ENCODE measurements at regions of chr14 and their contacts with region 1.

Region 1: GRCh38 chr14:93206793-93207467 is at the starts of genes GON7 and UBR7:
- DNase-seq: peak; percentile 96
- ATAC-seq: peak; percentile 99
- total RNA-seq, gene GON7: 15.6 TPM
- total RNA-seq, gene UBR7: 20.5 TPM

Region 2: GRCh38 chr14:93184388-93185353 is 22.3 kb before region 1 on chr14 and contains the starts of genes LYSET and MOAP1:
- intact Hi-C with region 1: loop called (anchors 1 kb)
- DNase-seq: peak; percentile 95
- ATAC-seq: peak; percentile 94
- total RNA-seq, gene LYSET: 23.0 TPM
- total RNA-seq, gene MOAP1: 52.5 TPM

Region 3: GRCh38 chr14:93301821-93302447 is 95.0 kb after region 1 on chr14:
- intact Hi-C with region 1: no loop called
- DNase-seq: no peak
- ATAC-seq: no peak

Region 4: DNA sequence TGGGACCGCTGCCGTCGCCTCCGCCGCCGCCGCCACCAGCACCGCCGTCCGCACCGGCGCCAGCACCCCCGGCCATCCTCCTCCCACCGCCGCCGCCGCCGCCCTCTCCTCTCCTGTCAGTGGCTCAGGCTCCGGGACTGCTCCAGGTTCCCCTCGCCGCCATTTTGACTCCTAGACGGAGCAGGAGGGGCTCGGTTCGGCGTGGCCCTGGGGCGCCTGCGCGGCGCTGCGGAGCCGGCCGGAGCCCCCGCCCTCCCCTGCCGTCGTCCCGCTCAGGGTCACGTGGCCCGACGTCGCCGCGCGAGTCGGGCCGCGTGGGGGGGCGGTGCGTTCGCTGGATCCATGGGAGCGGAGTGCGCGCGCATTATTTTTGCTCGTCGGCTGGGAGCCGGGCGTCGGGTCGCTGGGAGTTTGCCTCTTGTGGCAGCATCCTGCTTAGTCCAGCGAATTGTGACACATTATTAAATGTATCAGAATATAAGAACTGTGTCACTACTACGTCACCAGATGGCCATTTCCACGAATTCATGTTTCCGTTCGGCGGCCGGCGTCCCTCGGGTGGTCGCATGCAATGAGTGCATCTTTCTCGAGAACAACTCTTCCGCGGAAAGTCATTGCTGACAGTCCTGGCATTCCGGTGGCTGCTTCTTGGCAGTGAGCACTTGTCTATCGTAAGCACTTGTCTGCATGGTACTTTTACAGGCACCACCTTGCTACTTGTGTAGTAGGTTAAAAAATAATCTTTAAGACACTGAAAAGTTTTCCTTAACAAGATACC is 126.1 kb after region 1 on chr14 and contains the start of gene BTBD7:
- intact Hi-C with region 1: loop called (anchors 5 kb)
- DNase-seq: peak; percentile 98
- ATAC-seq: peak; percentile 100
- total RNA-seq, gene BTBD7: 22.5 TPM